A549 (cell line): ENCODE measurements at regions of chr1 and their contacts with region 1.

Region 1: DNA sequence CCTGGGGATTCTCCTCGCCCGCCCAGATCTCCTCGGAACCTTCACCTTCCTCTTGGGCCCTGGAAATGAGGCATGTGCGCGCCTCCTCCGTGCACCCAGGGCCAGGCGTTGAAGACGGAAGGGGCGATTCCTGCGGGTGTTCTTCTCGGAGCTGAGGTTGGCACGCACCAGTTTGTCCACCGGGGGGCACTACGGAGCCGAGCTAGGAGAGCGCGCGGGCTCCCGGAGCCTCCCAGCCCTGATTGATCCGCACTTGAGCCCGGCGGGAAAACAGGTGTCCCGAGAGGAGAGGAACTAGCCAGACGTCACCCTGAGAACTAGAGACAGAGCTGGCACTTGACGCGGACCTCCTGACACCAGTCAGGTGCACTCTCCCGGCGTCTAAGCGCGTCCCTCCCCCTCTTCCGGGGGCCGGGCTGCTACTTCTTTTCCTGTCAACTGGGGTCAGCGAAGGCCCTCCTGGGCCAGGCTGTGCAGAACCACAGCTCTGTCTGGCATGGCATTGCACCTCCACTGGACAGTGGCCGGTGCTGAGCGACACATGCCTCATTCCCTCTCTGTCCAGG is 18.3 kb upstream of the SERINC2 start:
- DNase-seq: peak; percentile 71 to 78
- ATAC-seq: peak; percentile 95 to 98
- H3K4me3 ChIP-seq: peak overlapping the region; percentile 32; the same call in 2 of the 3 replicates
- H3K27ac ChIP-seq: peak overlapping the region; percentile 48 to 74; a peak in 5 of 6 replicates
- H3K4me1 ChIP-seq: 0 out of 3 replicates have a peak, but pooled peaks cover 5% of the 10 kb centered on the region
- CTCF ChIP-seq: peak; percentile 72
- EP300 ChIP-seq: no peak
- POLR2A ChIP-seq: no peak
- RAD21 ChIP-seq: peak; percentile 67 to 74

Region 2: DNA sequence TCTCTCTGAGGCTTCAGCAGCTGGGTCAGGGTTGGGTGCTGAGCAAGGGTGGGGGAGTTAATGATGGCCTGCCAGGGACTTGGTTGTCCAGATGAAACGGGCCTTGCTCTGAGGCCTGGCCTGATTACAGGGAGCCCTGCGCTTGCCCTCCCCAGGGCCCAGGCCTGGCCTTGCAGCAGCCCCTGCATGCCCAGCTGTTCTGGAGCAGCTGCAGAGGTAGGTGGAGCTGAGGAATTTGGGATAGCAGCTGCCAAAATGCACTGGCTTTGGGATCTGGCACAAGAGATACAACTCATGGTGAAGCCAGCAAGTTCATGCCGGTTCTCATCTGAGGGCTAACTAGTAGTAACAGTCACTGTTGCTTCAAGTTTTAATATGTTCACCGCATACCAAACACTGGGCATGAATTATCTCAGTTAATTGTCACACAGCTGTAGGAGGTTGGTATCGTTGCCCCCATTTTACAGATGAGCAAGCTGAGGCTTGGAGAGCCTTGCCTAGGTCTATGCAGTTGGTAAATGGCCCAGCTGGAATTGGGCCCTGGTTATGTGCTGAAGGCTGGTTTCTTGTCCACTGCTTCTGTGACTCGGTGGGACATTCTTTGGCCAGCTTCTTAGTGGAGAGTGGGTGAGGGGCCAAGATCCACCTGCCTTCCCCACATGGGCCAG is 11.0 kb after region 1 on chr1:
- CTCF ChIA-PET with region 1: interaction called, 49 read pairs
- POLR2A ChIA-PET with region 1: no interaction called
- DNase-seq: no peak
- ATAC-seq: no peak
- H3K4me3 ChIP-seq: no peak overlapping the region
- H3K27ac ChIP-seq: no peak overlapping the region
- H3K4me1 ChIP-seq: no peaks in the 10 kb centered on the region
- CTCF ChIP-seq: no peak
- EP300 ChIP-seq: no peak
- POLR2A ChIP-seq: no peak
- RAD21 ChIP-seq: no peak

Region 3: GRCh38 chr1:31422505-31423319 is 28.0 kb after region 1 on chr1:
- CTCF ChIA-PET with region 1: interaction called, 151 read pairs
- POLR2A ChIA-PET with region 1: no interaction called
- DNase-seq: peak; percentile 71 to 75
- ATAC-seq: peak; percentile 92 to 93
- H3K4me3 ChIP-seq: no peak overlapping the region
- H3K27ac ChIP-seq: peak overlapping the region; percentile 63 to 69
- H3K4me1 ChIP-seq: peaks cover 29% of the 10 kb centered on the region
- CTCF ChIP-seq: peak; percentile 68
- EP300 ChIP-seq: no peak
- POLR2A ChIP-seq: no peak
- RAD21 ChIP-seq: peak; percentile 83 to 85

Region 4: DNA sequence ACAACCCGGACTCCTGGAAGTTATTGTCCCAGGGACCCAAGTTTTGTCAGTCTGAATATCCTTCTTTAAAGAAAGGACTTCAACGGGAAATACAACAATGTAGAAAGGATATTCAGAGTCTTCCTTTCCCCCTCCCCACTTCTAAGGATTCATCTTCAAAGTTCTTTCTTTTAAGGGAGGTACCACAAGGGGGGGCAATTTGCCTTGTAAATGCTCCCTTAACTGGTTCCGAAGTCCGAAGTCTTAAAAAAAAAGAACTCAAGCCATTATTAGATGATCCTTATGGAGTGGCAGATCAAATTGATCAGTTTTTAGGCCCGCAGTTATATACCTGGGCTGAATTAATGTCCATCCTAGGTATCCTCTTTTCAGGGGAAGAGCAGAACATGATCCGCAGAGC is 65.3 kb after region 1 on chr1:
- CTCF ChIA-PET with region 1: no interaction called
- POLR2A ChIA-PET with region 1: no interaction called
- DNase-seq: no peak
- ATAC-seq: no peak
- H3K4me3 ChIP-seq: no peak overlapping the region
- H3K27ac ChIP-seq: no peak overlapping the region
- H3K4me1 ChIP-seq: no peaks in the 10 kb centered on the region
- CTCF ChIP-seq: no peak
- EP300 ChIP-seq: no peak
- POLR2A ChIP-seq: no peak
- RAD21 ChIP-seq: peak in 1 of 2 experiments; percentile 12; a peak in 1 of 5 replicates

Region 5: DNA sequence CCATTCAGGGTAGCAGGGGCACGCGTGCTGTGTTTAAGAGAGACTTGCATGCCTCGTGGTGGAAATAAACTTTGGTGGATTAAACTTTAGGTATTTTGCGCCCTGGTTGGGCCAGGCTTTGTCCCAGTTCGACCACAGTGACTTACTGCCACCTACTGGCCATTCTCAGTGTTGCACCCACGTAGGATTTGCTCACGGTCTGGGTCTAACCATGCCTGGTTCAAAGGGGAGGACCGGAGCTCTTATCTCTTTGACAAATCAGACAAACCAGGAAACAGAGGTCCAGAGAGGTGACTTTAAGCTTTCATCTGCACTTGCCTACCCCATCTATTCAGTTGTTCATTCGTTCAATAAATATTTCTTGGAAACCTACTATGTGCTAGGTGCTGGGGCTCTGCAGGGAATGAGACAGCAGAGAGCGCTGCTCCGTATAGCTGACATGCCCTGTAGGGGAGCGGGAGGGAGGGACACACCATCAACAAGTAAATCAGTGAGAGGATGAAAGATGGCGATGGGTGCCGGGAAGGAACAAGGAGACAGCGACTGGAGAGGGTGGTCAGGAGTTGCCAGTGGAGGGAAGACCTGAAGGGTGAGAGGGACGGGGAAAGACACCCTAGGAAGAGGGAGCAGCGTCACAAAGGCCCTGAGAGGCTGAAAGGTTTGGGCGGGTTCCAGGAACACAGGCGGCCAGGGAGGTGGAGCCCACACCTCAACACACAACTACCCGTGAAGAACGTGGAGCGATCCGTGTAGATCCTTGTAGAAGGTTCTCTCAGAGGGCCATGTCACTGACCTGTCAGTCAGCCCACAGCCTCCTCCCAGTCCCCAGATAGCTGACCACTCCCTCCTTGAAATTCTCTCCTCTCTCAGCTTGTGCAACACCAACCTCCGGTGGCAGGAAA is 154.4 kb after region 1 on chr1:
- CTCF ChIA-PET with region 1: interaction called, 68 read pairs
- POLR2A ChIA-PET with region 1: interaction called, 3 read pairs
- DNase-seq: peak; percentile 74 to 84
- ATAC-seq: peak; percentile 93 to 94
- H3K4me3 ChIP-seq: peak overlapping the region; percentile 45
- H3K27ac ChIP-seq: peak overlapping the region; percentile 83 to 93
- H3K4me1 ChIP-seq: peaks cover 14% of the 10 kb centered on the region
- CTCF ChIP-seq: peak; percentile 92
- EP300 ChIP-seq: no peak
- POLR2A ChIP-seq: no peak; the same call in 1 of the 2 replicates
- RAD21 ChIP-seq: peak; percentile 90 to 93